Calu3 (cell line): ENCODE measurements at regions of chr16 and their contacts with region 1.

Region 1: GRCh38 chr16:11980136-11980844 is 3.8 kb downstream of the SNX29 start:
- DNase-seq: no peak
- H3K4me3 Mint-ChIP-seq: no peak overlapping the region
- H3K27ac Mint-ChIP-seq: no peak overlapping the region
- H3K4me1 Mint-ChIP-seq: peaks cover 27% of the 10 kb centered on the region
- H3K27me3 Mint-ChIP-seq: no peaks in the 10 kb centered on the region
- CTCF ChIP-seq: no peak

Region 2: GRCh38 chr16:11768849-11769248 is 211.4 kb before region 1 on chr16:
- CTCF ChIA-PET with region 1: no interaction called
- intact Hi-C with region 1: no loop called
- DNase-seq: no peak
- H3K4me3 Mint-ChIP-seq: no peak overlapping the region
- H3K27ac Mint-ChIP-seq: no peak overlapping the region
- H3K4me1 Mint-ChIP-seq: no peaks in the 10 kb centered on the region
- H3K27me3 Mint-ChIP-seq: no peaks in the 10 kb centered on the region
- CTCF ChIP-seq: no peak

Region 3: GRCh38 chr16:12024449-12024848 is 44.2 kb after region 1 on chr16:
- CTCF ChIA-PET with region 1: no interaction called
- intact Hi-C with region 1: loop called (anchors 5 kb)
- DNase-seq: peak; percentile 75
- H3K4me3 Mint-ChIP-seq: peak overlapping the region; percentile 6
- H3K27ac Mint-ChIP-seq: peak overlapping the region; percentile 8
- H3K4me1 Mint-ChIP-seq: peaks cover 45% of the 10 kb centered on the region
- H3K27me3 Mint-ChIP-seq: no peaks in the 10 kb centered on the region
- CTCF ChIP-seq: no peak

Region 4: GRCh38 chr16:12356618-12357355 is 376.5 kb after region 1 on chr16:
- CTCF ChIA-PET with region 1: no interaction called
- intact Hi-C with region 1: no loop called
- DNase-seq: no peak
- H3K4me3 Mint-ChIP-seq: no peak overlapping the region
- H3K27ac Mint-ChIP-seq: no peak overlapping the region
- H3K4me1 Mint-ChIP-seq: no peaks in the 10 kb centered on the region
- H3K27me3 Mint-ChIP-seq: no peaks in the 10 kb centered on the region
- CTCF ChIP-seq: no peak